ENCODE measurements at regions of chr22 and their contacts with region 1.

Region 1: DNA sequence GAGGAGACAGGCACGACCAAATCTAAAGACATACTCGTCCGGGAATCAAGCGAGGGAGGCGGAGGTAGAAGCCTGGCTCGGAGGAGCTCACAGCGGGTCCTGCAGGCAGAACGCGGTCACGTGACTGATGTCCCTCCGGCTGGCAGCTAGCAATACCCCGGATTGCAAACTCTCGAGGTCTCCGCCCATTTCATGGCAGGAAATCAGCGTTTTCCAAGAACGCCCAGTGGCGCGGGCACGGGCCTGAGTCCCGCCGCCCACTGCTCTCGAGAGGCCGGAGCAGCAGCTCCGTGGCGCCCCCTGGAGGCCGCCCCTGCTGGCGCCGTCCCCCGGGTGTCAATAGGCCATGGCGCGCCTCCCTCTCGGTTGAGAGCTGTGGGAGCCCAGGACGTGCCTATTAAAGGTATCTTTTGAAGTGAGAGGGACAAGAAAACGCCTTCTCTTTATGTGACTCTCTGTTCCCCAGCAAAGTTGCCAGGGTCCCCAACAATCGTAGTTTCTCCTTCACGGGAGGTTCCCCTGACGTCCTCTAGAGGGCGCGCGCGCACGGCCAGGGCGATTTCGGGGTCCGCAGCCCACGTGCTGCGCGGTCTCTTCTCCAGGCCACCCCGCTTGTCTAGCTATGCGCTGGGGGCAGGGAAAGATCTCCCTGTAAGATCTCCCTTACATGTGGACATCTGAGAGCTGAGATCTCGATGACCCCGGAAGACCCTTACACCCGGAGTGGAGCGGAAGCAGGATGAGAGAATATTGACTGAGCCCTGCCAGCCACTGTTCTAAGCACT is 37.3 kb upstream of the RBFOX2 start:
- DNase-seq: peak; percentile 92
- H3K4me3 Mint-ChIP-seq: peak overlapping the region; percentile 86
- H3K27ac Mint-ChIP-seq: peak overlapping the region; percentile 91
- H3K4me1 Mint-ChIP-seq: peaks cover 9% of the 10 kb centered on the region
- H3K27me3 Mint-ChIP-seq: no peaks in the 10 kb centered on the region
- CTCF ChIP-seq: peak; percentile 100

Region 2: GRCh38 chr22:35930933-35931332 is 135.0 kb before region 1 on chr22:
- CTCF ChIA-PET with region 1: interaction called, 19 read pairs
- intact Hi-C with region 1: loop called (anchors 2 kb)
- DNase-seq: peak; percentile 28
- H3K4me3 Mint-ChIP-seq: no peak overlapping the region
- H3K27ac Mint-ChIP-seq: no peak overlapping the region
- H3K4me1 Mint-ChIP-seq: no peaks in the 10 kb centered on the region
- H3K27me3 Mint-ChIP-seq: no peaks in the 10 kb centered on the region
- CTCF ChIP-seq: peak; percentile 50

Region 3: DNA sequence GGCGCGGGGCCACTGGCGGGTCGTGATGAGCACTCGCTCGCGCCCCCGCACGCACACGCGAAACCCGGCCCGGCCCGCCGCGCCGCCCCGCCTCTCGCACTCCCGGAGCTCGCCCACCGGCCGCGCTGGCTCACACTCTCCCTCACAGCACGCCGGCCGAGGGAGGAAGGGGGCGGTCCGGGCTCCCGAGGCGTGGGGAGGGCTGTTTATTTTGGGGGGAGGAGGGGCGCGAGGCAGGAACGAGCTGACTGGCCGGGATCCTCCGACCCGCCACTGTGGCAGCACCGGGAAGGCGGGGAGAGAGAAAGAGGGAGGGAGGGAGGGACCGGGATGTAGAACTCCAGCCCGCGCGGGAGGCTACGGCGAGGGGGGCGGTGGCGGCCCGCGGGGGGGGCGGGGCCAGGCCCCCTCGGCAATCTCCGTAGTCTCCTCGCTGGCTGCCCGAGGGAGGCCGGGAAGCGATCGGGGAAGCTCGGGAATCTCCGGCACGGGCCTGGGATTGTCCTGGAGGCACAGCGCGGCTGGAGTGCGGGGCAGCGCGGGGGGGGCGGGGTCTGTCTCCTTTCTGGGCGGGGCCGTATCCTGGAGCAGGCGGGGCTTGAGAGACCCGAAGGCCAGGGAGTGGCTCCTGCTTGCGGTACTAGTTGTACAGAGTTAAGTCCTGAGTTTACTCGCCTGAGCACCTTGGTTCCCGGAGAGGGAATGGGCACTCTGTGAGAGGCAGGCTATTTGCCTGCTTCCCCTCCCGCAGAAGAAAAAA is 37.1 kb before region 1 on chr22 and contains the start of gene RBFOX2:
- CTCF ChIA-PET with region 1: interaction called, 31 read pairs
- intact Hi-C with region 1: loop called (anchors 2 kb)
- DNase-seq: peak; percentile 98
- H3K4me3 Mint-ChIP-seq: peak within 1 kb of the TSS; percentile 87
- H3K27ac Mint-ChIP-seq: peak within 1 kb of the TSS; percentile 74
- H3K4me1 Mint-ChIP-seq: peaks cover 31% of the 10 kb centered on the region
- H3K27me3 Mint-ChIP-seq: no peaks in the 10 kb centered on the region
- CTCF ChIP-seq: no peak
- total RNA-seq, gene RBFOX2: 63.1 and 64.1 TPM in 2 replicates

Region 4: DNA sequence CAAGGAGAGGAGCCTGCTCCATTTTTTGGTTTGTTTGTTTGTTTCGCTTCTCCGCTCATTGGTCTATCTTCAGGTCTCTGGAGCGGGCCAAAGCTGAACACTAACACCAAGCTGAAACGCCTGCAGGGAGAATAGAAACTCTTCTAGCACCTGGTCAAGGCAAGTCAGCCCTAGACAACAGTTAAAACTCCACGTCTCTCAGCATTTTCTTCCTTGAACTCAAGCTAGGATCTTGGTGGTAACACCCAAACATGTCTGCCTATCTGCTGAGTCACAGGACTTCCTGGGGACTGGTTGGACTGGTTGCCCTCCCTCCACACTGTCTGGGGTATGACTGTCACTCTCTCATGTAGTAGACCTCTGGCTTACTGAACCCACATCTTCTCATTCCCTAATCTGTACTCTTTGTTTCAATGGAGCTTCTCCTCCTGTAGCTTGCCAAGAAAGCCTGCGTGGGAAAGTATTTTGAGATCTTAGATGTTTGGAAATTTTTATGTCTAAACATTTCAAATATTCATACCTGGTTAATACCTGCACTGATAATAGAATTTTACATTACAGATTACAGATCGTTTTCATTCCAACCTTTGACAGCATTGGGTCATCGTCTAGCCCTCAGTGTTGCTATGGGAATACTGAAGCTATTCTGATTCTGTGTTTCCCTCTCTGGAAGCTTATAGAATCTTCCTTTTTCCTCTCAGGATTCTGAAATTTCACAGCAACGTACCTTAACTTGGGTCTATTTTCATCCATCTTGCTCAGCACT is 13.3 kb before region 1 on chr22:
- CTCF ChIA-PET with region 1: interaction called, 21 read pairs
- intact Hi-C with region 1: no loop called
- DNase-seq: peak; percentile 84
- H3K4me3 Mint-ChIP-seq: peak overlapping the region; percentile 61
- H3K27ac Mint-ChIP-seq: peak overlapping the region; percentile 100
- H3K4me1 Mint-ChIP-seq: peaks cover 50% of the 10 kb centered on the region
- H3K27me3 Mint-ChIP-seq: no peaks in the 10 kb centered on the region
- CTCF ChIP-seq: no peak

Region 5: DNA sequence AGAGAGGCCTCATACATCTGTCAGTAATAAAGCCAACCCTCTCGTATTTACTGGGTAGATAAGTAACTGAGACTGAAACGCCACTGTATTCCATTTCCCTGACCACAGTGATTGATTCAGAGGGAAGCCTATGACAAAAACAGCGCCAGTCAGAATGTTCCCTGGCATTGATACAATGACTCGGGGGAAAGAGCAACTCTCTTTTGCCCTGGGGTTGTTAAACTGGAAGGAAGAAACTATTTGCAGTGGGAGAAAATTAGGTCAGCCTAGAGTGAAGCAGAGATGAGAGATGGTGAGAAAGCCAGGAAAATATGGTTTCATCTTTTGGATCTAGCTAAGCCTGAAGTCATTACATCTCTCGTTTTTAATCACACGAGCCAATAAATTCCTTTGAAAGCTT is 11.3 kb after region 1 on chr22:
- CTCF ChIA-PET with region 1: interaction called, 12 read pairs
- intact Hi-C with region 1: no loop called
- DNase-seq: no peak
- H3K4me3 Mint-ChIP-seq: no peak overlapping the region
- H3K27ac Mint-ChIP-seq: no peak overlapping the region
- H3K4me1 Mint-ChIP-seq: no peaks in the 10 kb centered on the region
- H3K27me3 Mint-ChIP-seq: no peaks in the 10 kb centered on the region
- CTCF ChIP-seq: no peak

Region 6: DNA sequence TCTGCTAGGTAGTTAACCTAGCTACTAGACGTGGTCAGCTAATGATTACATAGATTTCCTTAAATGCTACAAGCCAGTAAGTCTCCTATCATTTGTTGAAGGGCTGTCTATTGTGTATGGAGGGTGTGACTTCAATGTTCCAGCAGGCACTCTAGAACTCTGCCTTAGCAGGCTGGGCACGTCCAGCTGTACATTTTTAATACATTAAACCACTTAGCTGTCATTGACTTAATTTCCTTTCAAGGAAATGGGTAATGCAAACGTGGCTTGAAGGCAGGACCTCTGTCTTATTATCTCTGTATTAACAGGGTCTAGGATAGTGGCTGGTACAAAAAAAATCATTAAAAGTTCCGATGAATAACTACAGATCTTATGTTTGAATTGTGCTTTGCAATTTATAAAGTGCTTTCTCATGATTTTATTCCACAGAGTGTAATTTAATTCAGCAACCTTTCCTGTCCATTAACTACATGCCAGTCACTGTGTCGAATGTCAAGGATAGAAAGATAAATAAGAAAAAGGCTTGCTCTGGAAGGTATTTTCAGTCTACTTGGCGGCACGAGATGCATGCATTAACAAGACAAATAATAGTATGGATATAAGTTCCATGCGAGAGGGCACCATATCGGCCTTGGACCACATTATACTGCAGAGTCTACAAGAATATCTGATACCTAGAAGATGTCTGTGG is 34.3 kb after region 1 on chr22:
- CTCF ChIA-PET with region 1: no interaction called
- intact Hi-C with region 1: no loop called
- DNase-seq: no peak
- H3K4me3 Mint-ChIP-seq: no peak overlapping the region
- H3K27ac Mint-ChIP-seq: no peak overlapping the region
- H3K4me1 Mint-ChIP-seq: no peaks in the 10 kb centered on the region
- H3K27me3 Mint-ChIP-seq: peaks cover 4% of the 10 kb centered on the region
- CTCF ChIP-seq: no peak

Region 7: DNA sequence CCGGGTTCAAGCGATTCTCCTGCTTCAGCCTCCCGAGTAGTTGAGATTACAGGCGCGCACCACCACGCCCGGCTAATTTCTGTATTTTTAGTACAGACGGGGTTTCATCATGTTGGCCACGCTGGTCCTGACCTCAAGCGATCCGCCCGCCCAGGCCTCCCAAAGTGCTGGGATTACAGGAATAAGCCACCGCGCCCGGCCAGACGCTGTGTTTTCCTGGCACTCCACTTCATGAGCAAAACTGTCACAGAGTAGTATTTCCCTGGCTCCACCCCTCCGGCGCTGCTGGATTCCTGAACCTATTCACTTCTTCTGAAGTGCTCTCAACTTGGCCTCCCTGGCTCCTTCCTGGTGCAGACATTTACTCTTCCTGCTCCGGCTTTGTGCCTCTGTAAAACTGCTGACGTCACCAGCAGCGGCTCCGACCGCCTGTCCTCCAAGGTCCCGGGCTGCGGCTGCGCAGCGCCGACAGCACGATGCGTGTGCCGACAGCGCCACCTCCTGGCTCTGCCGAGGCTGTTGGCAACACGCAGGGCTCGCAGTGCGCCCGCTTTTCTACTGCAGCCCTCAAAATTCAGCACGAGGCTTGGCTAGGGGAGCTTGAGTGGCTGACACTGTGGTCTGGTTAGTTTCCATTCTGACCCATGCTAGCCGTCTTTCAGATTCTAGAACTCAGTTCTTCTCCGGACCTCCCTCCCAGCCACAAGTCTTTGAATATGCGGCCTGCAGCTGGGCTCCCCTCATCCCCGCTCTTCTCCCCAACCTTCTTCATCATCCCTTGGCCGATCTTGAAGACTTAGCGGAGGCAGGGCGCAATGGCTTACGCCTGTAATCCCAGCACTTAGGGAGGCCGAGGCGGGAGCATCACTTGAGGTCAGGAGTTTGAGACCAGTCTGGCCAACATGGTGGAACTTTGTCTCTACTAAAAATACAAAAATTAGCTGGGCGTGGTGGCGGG is 58.0 kb after region 1 on chr22:
- CTCF ChIA-PET with region 1: interaction called, 3 read pairs
- intact Hi-C with region 1: loop called (anchors 10 kb)
- DNase-seq: peak; percentile 93
- H3K4me3 Mint-ChIP-seq: peak overlapping the region; percentile 67
- H3K27ac Mint-ChIP-seq: peak overlapping the region; percentile 77
- H3K4me1 Mint-ChIP-seq: no peaks in the 10 kb centered on the region
- H3K27me3 Mint-ChIP-seq: peaks cover 31% of the 10 kb centered on the region
- CTCF ChIP-seq: peak; percentile 97